ENCODE measurements at regions of chr11 and their contacts with region 1.

Region 1: GRCh38 chr11:108733479-108734116 is 68.7 kb downstream of the DDX10 start:
- DNase-seq: peak; percentile 72
- H3K4me3 Mint-ChIP-seq: no peak overlapping the region
- H3K27ac Mint-ChIP-seq: peak overlapping the region; percentile 82
- H3K4me1 Mint-ChIP-seq: peaks cover 41% of the 10 kb centered on the region
- H3K27me3 Mint-ChIP-seq: no peaks in the 10 kb centered on the region

Region 2: GRCh38 chr11:108121274-108122155 is 612.1 kb before region 1 on chr11 and contains the start of gene ACAT1:
- CTCF ChIA-PET with region 1: no interaction called
- intact Hi-C with region 1: loop called (anchors 5 kb)
- DNase-seq: peak; percentile 96
- H3K4me3 Mint-ChIP-seq: peak within 1 kb of the TSS; percentile 85
- H3K27ac Mint-ChIP-seq: peak within 1 kb of the TSS; percentile 16
- H3K4me1 Mint-ChIP-seq: peaks cover 40% of the 10 kb centered on the region
- H3K27me3 Mint-ChIP-seq: no peaks in the 10 kb centered on the region
- total RNA-seq, gene ACAT1: 54.9 to 55.0 TPM

Region 3: DNA sequence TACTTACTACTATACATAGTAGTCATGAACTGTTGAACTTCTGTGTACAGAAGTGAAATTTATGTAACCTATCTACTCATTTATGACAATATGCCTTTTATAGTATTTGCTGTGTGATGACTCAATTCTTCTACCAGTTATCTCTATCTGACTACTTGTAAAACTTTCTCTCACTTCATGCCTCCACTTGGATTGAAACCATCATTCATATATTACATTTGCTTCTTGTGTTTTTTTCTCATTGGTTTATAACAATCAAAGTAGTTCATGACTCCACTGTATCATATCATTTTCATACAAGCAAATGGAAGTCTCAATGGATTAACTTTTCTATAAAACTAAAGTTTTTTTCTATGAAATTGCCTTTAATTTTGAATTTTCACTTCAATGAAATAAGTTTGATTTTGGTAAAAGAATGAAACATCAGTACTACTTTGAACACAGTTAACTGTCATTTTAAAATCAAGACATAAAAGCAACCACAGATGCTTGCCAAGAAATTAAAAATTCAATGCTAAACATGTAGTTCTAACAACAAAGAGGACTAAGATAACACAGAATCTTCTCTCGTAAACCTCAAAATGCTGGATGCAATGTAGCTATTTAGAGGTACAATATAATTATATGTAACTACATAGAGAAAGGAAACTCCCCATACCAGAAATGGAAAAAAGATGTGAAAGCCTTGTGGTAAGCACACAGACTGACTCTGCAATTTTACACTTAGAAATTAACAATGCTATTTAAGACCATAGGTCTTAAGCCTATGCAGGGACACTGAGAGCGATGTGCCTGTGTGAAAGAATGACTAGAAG is 112.4 kb before region 1 on chr11:
- CTCF ChIA-PET with region 1: interaction called, 3 read pairs
- intact Hi-C with region 1: loop called (anchors 1 kb)
- DNase-seq: no peak
- H3K4me3 Mint-ChIP-seq: no peak overlapping the region
- H3K27ac Mint-ChIP-seq: no peak overlapping the region
- H3K4me1 Mint-ChIP-seq: peaks cover 24% of the 10 kb centered on the region
- H3K27me3 Mint-ChIP-seq: peaks cover 10% of the 10 kb centered on the region

Region 4: GRCh38 chr11:108713076-108713790 is 20.4 kb before region 1 on chr11:
- CTCF ChIA-PET with region 1: interaction called, 5 read pairs
- intact Hi-C with region 1: loop called (anchors 1 kb)
- DNase-seq: no peak
- H3K4me3 Mint-ChIP-seq: no peak overlapping the region
- H3K27ac Mint-ChIP-seq: peak overlapping the region; percentile 13
- H3K4me1 Mint-ChIP-seq: peaks cover 23% of the 10 kb centered on the region
- H3K27me3 Mint-ChIP-seq: no peaks in the 10 kb centered on the region

Region 5: GRCh38 chr11:108803776-108804175 is 70.2 kb after region 1 on chr11:
- CTCF ChIA-PET with region 1: no interaction called
- intact Hi-C with region 1: no loop called
- DNase-seq: no peak
- H3K4me3 Mint-ChIP-seq: no peak overlapping the region
- H3K27ac Mint-ChIP-seq: no peak overlapping the region
- H3K4me1 Mint-ChIP-seq: no peaks in the 10 kb centered on the region
- H3K27me3 Mint-ChIP-seq: no peaks in the 10 kb centered on the region

Region 6: GRCh38 chr11:108871152-108871551 is 137.6 kb after region 1 on chr11:
- CTCF ChIA-PET with region 1: no interaction called
- intact Hi-C with region 1: loop called (anchors 1 kb)
- DNase-seq: peak; percentile 67
- H3K4me3 Mint-ChIP-seq: no peak overlapping the region
- H3K27ac Mint-ChIP-seq: no peak overlapping the region
- H3K4me1 Mint-ChIP-seq: peaks cover 29% of the 10 kb centered on the region
- H3K27me3 Mint-ChIP-seq: no peaks in the 10 kb centered on the region

Region 7: DNA sequence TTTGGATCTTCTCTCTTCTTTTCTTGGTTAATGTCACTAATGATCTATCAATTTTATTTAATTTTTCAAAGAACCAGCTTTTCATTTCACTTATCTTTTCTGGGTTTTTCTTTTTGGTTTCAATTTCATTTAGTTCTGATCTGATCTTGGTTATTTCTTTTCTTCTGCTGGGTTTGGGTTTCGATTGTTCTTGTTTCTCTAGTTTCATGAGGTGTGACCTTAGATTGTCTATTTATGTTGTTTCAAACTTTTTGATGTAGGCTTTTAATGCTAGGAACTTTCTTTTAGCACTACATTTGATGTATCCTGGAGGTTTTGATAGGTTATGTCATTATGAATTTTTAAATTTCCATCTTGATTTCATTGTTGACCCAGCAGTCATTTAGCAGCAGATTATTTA is 830.6 kb after region 1 on chr11:
- CTCF ChIA-PET with region 1: no interaction called
- intact Hi-C with region 1: no loop called
- DNase-seq: no peak
- H3K4me3 Mint-ChIP-seq: no peak overlapping the region
- H3K27ac Mint-ChIP-seq: no peak overlapping the region
- H3K4me1 Mint-ChIP-seq: no peaks in the 10 kb centered on the region
- H3K27me3 Mint-ChIP-seq: no peaks in the 10 kb centered on the region

Region 8: GRCh38 chr11:110349138-110349996 is 1615.8 kb after region 1 on chr11:
- CTCF ChIA-PET with region 1: no interaction called
- intact Hi-C with region 1: loop called (anchors 10 kb)
- DNase-seq: peak; percentile 91
- H3K4me3 Mint-ChIP-seq: peak overlapping the region; percentile 14
- H3K27ac Mint-ChIP-seq: peak overlapping the region; percentile 97
- H3K4me1 Mint-ChIP-seq: peaks cover 67% of the 10 kb centered on the region
- H3K27me3 Mint-ChIP-seq: no peaks in the 10 kb centered on the region